ENCODE measurements at regions of chr17 and their contacts with region 1.

Region 1: DNA sequence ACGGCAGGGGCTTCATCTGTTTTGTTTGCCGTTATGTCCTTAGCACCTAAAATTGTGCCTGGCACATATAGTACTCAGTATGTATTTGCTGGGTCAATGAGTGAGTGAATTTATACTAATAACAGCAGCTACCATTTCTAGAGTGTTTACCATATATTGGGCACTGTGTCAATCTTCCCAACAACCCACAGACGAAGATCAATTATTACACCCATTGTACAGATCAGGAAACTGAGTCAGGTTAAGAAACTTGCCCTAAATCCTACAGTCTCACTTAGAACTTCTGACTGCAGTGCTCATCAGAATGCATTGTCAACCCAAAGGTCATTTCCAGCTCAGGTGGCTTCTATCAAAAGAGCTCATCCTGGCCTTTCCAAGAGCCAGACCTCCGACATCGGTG is 44.5 kb upstream of the MEOX1 start:
- DNase-seq: no peak
- H3K4me3 ChIP-seq: no peak overlapping the region
- H3K4me3 Mint-ChIP-seq: no peak overlapping the region
- H3K27ac ChIP-seq: no peak overlapping the region
- H3K27ac Mint-ChIP-seq: no peak overlapping the region
- H3K4me1 ChIP-seq: peaks cover 5% of the 10 kb centered on the region
- H3K4me1 Mint-ChIP-seq: peaks cover 8 to 12% (median 10%) of the 10 kb centered on the region in 3 donors
- H3K27me3 ChIP-seq: no peaks in the 10 kb centered on the region
- H3K27me3 Mint-ChIP-seq: peaks cover 26 to 43% of the 10 kb centered on the region in 2 donors

Region 2: GRCh38 chr17:43766413-43767052 is 60.3 kb after region 1 on chr17:
- CTCF ChIA-PET with region 1: interaction called, 335 read pairs
- POLR2A ChIA-PET with region 1: no interaction called
- DNase-seq: peak in 3 of 5 donors; percentile 42 to 64 (median 45)
- H3K4me3 ChIP-seq: no peak overlapping the region
- H3K4me3 Mint-ChIP-seq: no peak overlapping the region
- H3K27ac ChIP-seq: no peak overlapping the region
- H3K27ac Mint-ChIP-seq: no peak overlapping the region
- H3K4me1 ChIP-seq: no peaks in the 10 kb centered on the region
- H3K4me1 Mint-ChIP-seq: no peaks in the 10 kb centered on the region
- H3K27me3 ChIP-seq: no peaks in the 10 kb centered on the region
- H3K27me3 Mint-ChIP-seq: peaks cover 0 to 9% of the 10 kb centered on the region in 2 donors

Measured in CD8-positive, alpha-beta memory T cell (primary cell).